Ovary (tissue), 10 donors: ENCODE measurements at regions of chr1 and their contacts with region 1.

Region 1: DNA sequence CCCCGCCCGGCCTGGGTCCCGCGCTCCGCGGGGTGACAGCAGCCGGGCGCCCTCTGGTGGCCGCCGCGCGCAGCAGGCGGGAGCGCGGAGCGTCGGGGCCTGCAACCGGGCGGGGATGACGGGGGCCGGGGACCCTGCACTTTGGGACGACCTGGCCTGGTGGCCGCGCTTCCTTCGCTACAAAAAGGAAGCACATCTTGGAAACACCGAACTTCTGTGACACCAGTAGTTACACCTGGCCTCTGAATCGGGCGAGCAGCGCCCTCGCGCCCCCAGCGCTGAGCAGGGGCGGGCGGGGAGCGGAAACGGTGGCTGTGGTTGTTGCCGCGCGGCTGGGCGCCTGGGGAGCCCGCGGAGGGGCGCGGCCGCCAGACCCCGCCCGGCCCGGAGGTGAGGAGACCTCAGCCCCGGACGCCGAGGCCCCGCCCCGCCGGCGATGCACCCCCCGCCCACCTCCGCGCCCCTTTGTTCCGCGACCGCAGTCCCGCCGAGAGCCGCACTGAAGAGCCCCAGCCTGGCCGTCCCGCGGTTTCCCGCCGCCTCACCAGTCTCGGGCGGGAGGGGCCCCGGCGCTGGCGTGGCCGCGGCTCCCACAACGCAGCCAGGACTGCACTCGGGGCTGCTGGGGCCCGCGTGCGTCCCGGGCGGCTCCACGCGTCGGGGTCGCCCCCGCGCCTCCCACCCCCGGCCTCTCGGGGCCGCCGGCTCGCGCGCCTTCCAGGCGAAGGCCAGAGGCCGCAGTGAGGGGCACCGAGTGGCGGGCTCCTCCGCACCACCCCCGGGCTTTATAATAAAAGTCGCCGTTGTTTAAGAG is 59.3 kb downstream of the H3-3A start:
- DNase-seq: peak; percentile 69 to 82 (median 80)
- H3K4me3 ChIP-seq: peak overlapping the region; percentile 80
- H3K27ac ChIP-seq: peak overlapping the region; percentile 39 to 71
- H3K4me1 ChIP-seq: no peaks in the 10 kb centered on the region
- H3K27me3 ChIP-seq: no peaks in the 10 kb centered on the region
- CTCF ChIP-seq: peak; percentile 47 to 95 (median 93)
- EP300 ChIP-seq: no peak
- POLR2A ChIP-seq: peak; percentile 18

Region 2: GRCh38 chr1:225987491-225988316 is 134.1 kb before region 1 on chr1:
- intact Hi-C with region 1: loop called in 2 of 4 experiments (anchors 5 to 10 kb)
- DNase-seq: no peak
- H3K4me3 ChIP-seq: no peak overlapping the region
- H3K27ac ChIP-seq: no peak overlapping the region
- H3K4me1 ChIP-seq: no peaks in the 10 kb centered on the region
- H3K27me3 ChIP-seq: no peaks in the 10 kb centered on the region
- CTCF ChIP-seq: peak; percentile 60 to 72 (median 63)
- EP300 ChIP-seq: no peak
- POLR2A ChIP-seq: no peak

Region 3: DNA sequence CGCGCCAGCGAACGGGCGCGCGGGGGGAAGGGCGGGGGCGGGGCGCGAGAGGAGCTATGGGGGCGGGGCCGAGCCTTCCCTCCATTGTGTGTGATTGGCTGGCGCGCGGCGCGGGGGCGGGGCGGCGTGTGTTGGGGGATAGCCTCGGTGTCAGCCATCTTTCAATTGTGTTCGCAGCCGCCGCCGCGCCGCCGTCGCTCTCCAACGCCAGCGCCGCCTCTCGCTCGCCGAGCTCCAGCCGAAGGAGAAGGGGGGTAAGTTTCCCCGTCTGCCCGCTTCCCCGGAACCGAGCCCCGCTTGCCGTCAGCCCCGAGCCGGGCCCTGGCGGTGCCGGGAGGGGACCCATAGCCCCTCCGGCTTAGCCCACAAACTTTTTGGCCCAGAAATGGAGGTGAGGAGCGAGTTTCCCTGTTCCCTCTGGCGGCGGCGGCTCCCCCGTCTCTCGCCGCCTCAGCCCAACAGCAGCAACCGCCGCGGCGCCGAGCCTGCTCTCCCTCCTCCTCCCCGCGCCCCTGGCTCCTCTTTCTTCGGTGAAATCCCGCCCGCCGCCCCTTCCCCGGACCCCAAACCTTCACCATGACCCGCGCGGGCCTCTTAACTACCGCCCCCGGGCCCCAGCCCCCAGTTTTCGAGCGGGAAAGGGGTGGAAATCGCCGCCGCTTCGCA is 59.1 kb before region 1 on chr1 and contains the start of gene H3-3A:
- intact Hi-C with region 1: loop called in 3 of 4 experiments (anchors 5 kb)
- DNase-seq: peak; percentile 99 to 100 (median 100)
- H3K4me3 ChIP-seq: peak within 1 kb of the TSS; percentile 84
- H3K27ac ChIP-seq: peak within 1 kb of the TSS; percentile 95 to 99
- H3K4me1 ChIP-seq: peaks cover 3% of the 10 kb centered on the region
- H3K27me3 ChIP-seq: no peaks in the 10 kb centered on the region
- CTCF ChIP-seq: peak in 2 of 3 donors; percentile 39 to 46
- EP300 ChIP-seq: no peak
- POLR2A ChIP-seq: peak; percentile 96
- total RNA-seq, gene H3-3A: 266 to 526 (median 420) TPM

Region 4: GRCh38 chr1:226083302-226084101 is 38.3 kb before region 1 on chr1:
- intact Hi-C with region 1: loop called in 1 of 4 experiments (anchors 5 kb)
- DNase-seq: peak; percentile 92 to 96 (median 95)
- H3K4me3 ChIP-seq: peak overlapping the region; percentile 53
- H3K27ac ChIP-seq: peak overlapping the region; percentile 15 to 84
- H3K4me1 ChIP-seq: peaks cover 2% of the 10 kb centered on the region
- H3K27me3 ChIP-seq: no peaks in the 10 kb centered on the region
- CTCF ChIP-seq: no peak
- EP300 ChIP-seq: no peak
- POLR2A ChIP-seq: peak; percentile 62

Region 5: DNA sequence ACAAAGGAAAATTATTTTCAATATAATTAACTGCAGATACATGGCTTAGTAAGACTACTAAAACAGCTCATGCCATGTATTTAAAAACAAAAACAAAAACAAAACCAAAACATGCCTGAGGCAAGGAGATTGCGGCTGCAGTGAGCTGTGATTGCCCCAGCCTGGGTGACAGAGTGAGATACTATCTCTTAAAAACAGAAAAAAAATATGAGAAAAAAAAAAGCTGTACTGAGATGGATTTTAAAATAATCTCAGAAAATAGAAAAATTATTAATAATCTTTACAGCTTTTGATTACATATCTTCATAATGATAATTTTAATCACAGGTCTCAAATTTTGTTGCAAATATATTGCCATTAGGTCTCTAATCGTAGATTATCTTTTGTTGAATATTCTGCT is 211.2 kb after region 1 on chr1:
- intact Hi-C with region 1: loop called in 1 of 4 experiments (anchors 10 kb)
- DNase-seq: no peak
- H3K4me3 ChIP-seq: no peak overlapping the region
- H3K27ac ChIP-seq: no peak overlapping the region
- H3K4me1 ChIP-seq: no peaks in the 10 kb centered on the region
- H3K27me3 ChIP-seq: no peaks in the 10 kb centered on the region
- CTCF ChIP-seq: no peak
- EP300 ChIP-seq: no peak
- POLR2A ChIP-seq: no peak

Region 6: DNA sequence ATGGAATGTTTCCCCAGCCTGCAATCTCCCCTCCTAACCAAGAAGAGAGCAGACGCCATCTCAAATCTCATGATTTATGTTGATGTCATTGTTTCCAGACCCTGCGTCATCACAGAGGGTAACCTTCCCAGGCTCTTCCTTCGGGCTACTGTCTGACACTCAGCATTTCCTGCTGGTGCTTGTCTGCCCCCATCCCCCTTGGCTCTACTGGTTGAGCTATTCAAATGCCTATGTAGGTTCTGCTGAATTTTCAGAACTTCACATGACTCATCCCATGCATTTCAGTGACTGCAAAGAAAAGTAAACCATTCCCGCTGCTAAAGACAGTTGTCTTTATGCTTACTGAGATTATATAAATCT is 642.1 kb after region 1 on chr1:
- intact Hi-C with region 1: no loop called
- DNase-seq: no peak
- H3K4me3 ChIP-seq: no peak overlapping the region
- H3K27ac ChIP-seq: no peak overlapping the region
- H3K4me1 ChIP-seq: no peaks in the 10 kb centered on the region
- H3K27me3 ChIP-seq: no peaks in the 10 kb centered on the region
- CTCF ChIP-seq: no peak
- EP300 ChIP-seq: no peak
- POLR2A ChIP-seq: no peak